Panc1 (cell line): ENCODE measurements at regions of chr10 and their contacts with region 1.

Region 1: DNA sequence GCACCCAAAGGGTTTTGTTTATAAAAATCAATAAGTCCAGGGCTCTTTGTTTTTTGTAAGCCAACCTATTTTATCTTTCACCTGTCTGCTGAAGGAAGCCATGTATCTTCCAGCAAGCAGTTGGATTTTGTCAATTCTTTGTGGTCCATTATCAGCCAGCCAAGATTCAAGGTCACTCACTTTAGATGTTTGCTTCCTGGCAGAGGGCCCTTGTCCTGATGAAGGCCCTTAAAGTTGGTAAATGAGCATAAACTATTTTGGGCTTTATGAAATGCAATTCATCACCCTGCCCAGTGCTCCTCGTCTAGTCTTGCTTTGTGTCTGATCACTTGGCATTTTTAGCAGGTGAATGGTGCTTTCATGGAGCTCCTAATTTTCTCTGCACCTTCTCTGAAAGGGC is 1004.2 kb downstream of the GRID1 start:
- DNase-seq: no peak
- ATAC-seq: no peak
- H3K4me3 ChIP-seq: no peak overlapping the region
- H3K27ac ChIP-seq: no peak overlapping the region
- H3K4me1 ChIP-seq: no peaks in the 10 kb centered on the region
- H3K27me3 ChIP-seq: no peaks in the 10 kb centered on the region
- CTCF ChIP-seq: no peak

Region 2: GRCh38 chr10:85407088-85407487 is 44.7 kb after region 1 on chr10:
- CTCF ChIA-PET with region 1: interaction called, 11 read pairs
- POLR2A ChIA-PET with region 1: no interaction called
- in situ Hi-C with region 1: no loop called
- intact Hi-C with region 1: no loop called
- DNase-seq: no peak
- ATAC-seq: no peak
- H3K4me3 ChIP-seq: no peak overlapping the region
- H3K27ac ChIP-seq: no peak overlapping the region
- H3K4me1 ChIP-seq: no peaks in the 10 kb centered on the region
- H3K27me3 ChIP-seq: no peaks in the 10 kb centered on the region
- CTCF ChIP-seq: no peak

Region 3: GRCh38 chr10:85575441-85575840 is 213.0 kb after region 1 on chr10:
- CTCF ChIA-PET with region 1: no interaction called
- POLR2A ChIA-PET with region 1: no interaction called
- in situ Hi-C with region 1: no loop called
- intact Hi-C with region 1: no loop called
- DNase-seq: no peak
- ATAC-seq: no peak
- H3K4me3 ChIP-seq: no peak overlapping the region
- H3K27ac ChIP-seq: no peak overlapping the region
- H3K4me1 ChIP-seq: no peaks in the 10 kb centered on the region
- H3K27me3 ChIP-seq: no peaks in the 10 kb centered on the region
- CTCF ChIP-seq: no peak